ENCODE measurements at regions of chr2 and their contacts with region 1.

Region 1: DNA sequence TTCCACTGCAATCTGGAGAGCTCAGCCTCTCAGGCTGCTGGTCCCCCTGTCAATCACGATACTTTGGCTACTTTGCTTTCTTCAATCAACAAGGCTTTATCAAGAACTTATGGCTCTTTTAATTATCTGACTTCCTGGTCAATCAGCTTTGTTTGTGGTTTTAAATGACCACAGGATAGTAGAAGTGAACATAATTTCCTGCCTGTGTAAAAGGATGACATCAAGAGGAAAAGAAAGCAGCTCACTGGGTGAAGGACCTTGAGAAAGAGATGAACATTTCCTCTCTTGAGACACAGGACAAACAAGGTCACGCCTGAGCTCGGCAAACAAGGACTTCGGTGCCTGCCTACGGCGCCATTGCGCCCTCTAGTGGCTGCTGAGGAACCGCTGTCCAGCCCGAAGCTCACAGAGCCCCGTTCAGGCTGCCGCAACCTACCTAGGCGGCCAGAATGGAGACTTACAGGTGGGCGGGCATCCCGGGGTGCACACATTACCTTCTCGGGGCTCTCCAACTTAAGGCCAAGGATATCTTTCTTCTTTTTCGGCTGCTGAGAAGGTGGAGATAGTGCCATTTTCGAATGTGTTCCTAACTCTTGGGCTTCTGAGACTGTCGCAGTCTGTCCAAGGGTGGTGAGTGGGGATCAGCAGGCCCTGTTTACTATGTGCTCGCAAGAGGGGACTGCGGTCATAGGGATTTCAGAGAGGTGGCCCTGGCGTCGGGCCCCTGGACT is 54.0 kb downstream of the IL1RL2 start:
- DNase-seq: peak; percentile 77 to 83 (median 77)
- H3K4me3 ChIP-seq: no peak overlapping the region
- H3K4me3 Mint-ChIP-seq: peak overlapping the region in 4 of 8 donors; percentile 10 to 57 (median 38)
- H3K27ac ChIP-seq: no peak overlapping the region
- H3K27ac Mint-ChIP-seq: peak overlapping the region in 6 of 7 donors; percentile 3 to 78 (median 62)
- H3K4me1 ChIP-seq: peaks cover 12% of the 10 kb centered on the region
- H3K4me1 Mint-ChIP-seq: peaks cover 6 to 19% (median 11%) of the 10 kb centered on the region in 4 donors
- H3K27me3 ChIP-seq: no peaks in the 10 kb centered on the region
- H3K27me3 Mint-ChIP-seq: no peaks in the 10 kb centered on the region

Region 2: GRCh38 chr2:101419096-101419663 is 821.6 kb before region 1 on chr2:
- CTCF ChIA-PET with region 1: interaction called, 8 read pairs
- POLR2A ChIA-PET with region 1: interaction called, 3 read pairs
- intact Hi-C with region 1: loop called (anchors 2 kb)
- DNase-seq: peak; percentile 59 to 66 (median 64)
- H3K4me3 ChIP-seq: no peak overlapping the region
- H3K4me3 Mint-ChIP-seq: no peak overlapping the region
- H3K27ac ChIP-seq: no peak overlapping the region
- H3K27ac Mint-ChIP-seq: no peak overlapping the region
- H3K4me1 ChIP-seq: no peaks in the 10 kb centered on the region
- H3K4me1 Mint-ChIP-seq: no peaks in the 10 kb centered on the region
- H3K27me3 ChIP-seq: no peaks in the 10 kb centered on the region
- H3K27me3 Mint-ChIP-seq: no peaks in the 10 kb centered on the region

Region 3: DNA sequence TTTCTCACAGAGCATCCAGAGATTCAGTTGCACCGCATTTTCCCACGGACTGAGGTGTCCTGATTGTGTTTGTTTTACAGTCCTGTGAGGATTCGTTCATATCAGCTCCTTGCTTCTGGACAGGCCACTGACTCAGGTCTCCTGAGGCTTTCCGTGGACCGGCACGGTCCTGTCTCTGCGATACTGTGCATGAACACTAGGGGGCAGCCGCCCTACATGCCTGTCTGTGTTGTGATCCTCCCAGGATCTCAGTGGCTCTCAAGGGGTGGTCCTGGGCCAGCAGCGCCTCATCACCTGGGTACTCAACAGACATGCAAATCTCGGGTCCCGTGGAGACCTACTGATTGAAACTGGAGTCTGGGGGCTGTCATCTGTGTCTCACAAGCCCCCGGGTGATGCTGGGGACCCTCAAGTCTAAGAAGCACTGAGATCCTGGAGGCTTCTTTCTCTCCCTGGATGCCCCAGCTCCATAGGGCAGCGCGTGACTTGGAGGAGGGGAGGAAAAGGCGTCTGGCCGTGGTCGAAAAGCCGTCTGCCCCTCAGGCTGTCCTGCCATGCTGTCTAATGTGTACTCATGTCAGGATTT is 220.1 kb before region 1 on chr2:
- CTCF ChIA-PET with region 1: interaction called, 318 read pairs
- POLR2A ChIA-PET with region 1: interaction called, 11 read pairs
- intact Hi-C with region 1: loop called (anchors 1 kb)
- DNase-seq: peak; percentile 70 to 80 (median 72)
- H3K4me3 ChIP-seq: no peak overlapping the region
- H3K4me3 Mint-ChIP-seq: peak overlapping the region in 2 of 8 donors; percentile 24 to 31
- H3K27ac ChIP-seq: no peak overlapping the region
- H3K27ac Mint-ChIP-seq: no peak overlapping the region
- H3K4me1 ChIP-seq: no peaks in the 10 kb centered on the region
- H3K4me1 Mint-ChIP-seq: peaks cover 0 to 6% (median 3%) of the 10 kb centered on the region in 4 donors
- H3K27me3 ChIP-seq: no peaks in the 10 kb centered on the region
- H3K27me3 Mint-ChIP-seq: no peaks in the 10 kb centered on the region

Region 4: DNA sequence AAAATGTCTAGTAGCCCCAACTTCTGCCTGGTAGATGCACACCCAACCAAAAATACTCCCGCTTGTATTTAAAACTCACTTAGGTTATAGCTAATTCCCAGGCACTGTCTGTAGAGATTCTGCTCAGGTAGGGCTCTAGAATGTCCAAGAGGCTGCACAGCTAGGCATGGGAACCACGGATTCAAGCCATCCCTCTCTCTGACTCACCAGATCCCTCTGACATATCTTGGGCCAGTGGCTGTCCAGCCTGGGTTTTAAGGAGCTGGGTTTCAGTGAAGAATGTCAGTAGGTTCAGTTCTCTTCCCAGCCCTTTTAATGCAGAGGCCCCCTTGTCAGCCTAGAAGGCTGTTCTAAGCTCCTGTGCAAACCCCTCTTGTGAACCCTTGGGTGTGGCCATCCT is 114.2 kb before region 1 on chr2:
- CTCF ChIA-PET with region 1: interaction called, 11 read pairs
- POLR2A ChIA-PET with region 1: no interaction called
- intact Hi-C with region 1: no loop called
- DNase-seq: no peak
- H3K4me3 ChIP-seq: no peak overlapping the region
- H3K4me3 Mint-ChIP-seq: no peak overlapping the region
- H3K27ac ChIP-seq: no peak overlapping the region
- H3K27ac Mint-ChIP-seq: no peak overlapping the region
- H3K4me1 ChIP-seq: no peaks in the 10 kb centered on the region
- H3K4me1 Mint-ChIP-seq: peaks cover 0 to 7% (median 2%) of the 10 kb centered on the region in 4 donors
- H3K27me3 ChIP-seq: no peaks in the 10 kb centered on the region
- H3K27me3 Mint-ChIP-seq: peaks cover 2 to 3% of the 10 kb centered on the region in 2 donors

Region 5: DNA sequence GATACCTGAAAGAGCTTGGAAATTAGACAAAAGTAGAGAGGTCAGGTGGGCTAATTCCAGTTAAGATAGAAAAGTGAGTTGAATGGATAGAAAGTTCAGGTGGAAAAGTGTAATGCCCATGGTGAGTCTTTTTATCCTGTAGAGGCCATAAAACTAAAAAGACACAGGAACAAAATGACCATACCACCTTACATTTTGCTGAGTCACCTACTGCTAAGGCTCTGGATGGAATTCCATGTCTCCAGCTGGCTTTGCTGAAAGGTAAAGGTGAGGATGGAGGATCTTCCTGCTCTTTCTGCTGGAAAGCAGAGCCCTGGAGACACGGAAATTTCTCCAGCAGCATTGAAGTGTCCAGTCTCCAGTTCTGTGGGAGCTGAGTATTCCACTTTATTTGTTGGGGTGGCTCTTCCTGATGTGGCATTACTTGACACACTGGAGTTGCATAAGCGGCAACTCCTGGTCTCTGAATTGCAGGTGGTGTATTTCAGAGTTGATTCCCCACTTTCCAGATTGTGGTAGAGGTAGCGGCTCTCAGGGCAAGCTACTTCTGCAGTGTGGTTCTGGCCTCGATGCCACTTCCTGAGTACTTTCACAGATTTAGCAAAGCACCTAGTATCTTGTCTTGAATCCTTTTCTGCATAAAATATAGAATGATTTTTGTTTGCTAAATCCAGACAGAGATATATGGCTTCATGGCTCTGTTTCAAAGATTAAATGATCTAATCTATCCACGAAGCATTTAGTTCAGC is 43.2 kb before region 1 on chr2:
- CTCF ChIA-PET with region 1: interaction called, 10 read pairs
- POLR2A ChIA-PET with region 1: no interaction called
- intact Hi-C with region 1: no loop called
- DNase-seq: no peak
- H3K4me3 ChIP-seq: no peak overlapping the region
- H3K4me3 Mint-ChIP-seq: no peak overlapping the region
- H3K27ac ChIP-seq: no peak overlapping the region
- H3K27ac Mint-ChIP-seq: no peak overlapping the region
- H3K4me1 ChIP-seq: peaks cover 4% of the 10 kb centered on the region
- H3K4me1 Mint-ChIP-seq: peaks cover 2 to 9% (median 7%) of the 10 kb centered on the region in 4 donors
- H3K27me3 ChIP-seq: no peaks in the 10 kb centered on the region
- H3K27me3 Mint-ChIP-seq: peaks cover 2% of the 10 kb centered on the region in 2 donors

Region 6: DNA sequence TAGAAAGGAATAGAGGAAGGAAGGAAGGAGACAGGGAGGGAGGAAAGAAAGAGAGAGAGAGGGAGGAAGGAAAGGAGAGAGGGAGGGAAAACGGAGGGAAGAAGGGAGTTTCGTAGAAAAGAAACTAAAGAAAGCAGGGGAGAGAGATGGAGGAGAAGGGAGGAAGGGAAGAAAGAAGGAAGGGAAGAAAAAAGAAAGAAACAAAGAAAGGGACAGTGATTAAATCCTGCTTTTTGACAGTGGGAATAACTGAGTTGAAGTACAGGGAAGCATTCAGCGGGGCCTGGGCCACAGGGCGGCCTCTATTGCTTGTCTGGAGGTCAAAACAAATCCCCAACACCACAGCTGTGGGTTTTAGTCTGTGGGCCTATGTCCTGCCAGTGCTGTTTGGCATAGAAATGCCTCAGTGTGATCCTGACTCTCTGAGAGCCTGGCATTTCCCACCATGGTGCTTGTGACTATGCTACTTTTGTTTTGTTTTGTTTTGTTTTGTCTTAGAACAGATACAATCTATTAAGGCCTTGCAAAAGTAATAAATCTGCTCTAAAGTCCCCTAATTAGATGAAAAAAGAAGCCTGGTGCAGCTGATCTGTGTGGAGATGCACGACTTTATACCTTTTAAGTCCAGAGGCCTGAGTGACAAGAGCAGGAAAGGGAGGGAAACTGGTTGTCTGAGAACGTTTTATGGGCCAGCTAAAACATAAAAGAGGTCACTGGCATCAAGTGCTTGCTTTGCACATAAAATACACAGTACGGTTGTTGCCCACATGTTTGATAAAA is 14.0 kb before region 1 on chr2:
- CTCF ChIA-PET with region 1: interaction called, 33 read pairs
- POLR2A ChIA-PET with region 1: interaction called, 6 read pairs
- intact Hi-C with region 1: no loop called
- DNase-seq: no peak
- H3K4me3 ChIP-seq: no peak overlapping the region
- H3K4me3 Mint-ChIP-seq: peak overlapping the region in 2 of 8 donors; percentile 17
- H3K27ac ChIP-seq: no peak overlapping the region
- H3K27ac Mint-ChIP-seq: peak overlapping the region; percentile 63 to 92 (median 83)
- H3K4me1 ChIP-seq: peaks cover 20% of the 10 kb centered on the region
- H3K4me1 Mint-ChIP-seq: peaks cover 7 to 18% (median 12%) of the 10 kb centered on the region in 4 donors
- H3K27me3 ChIP-seq: no peaks in the 10 kb centered on the region
- H3K27me3 Mint-ChIP-seq: no peaks in the 10 kb centered on the region

Region 7: GRCh38 chr2:102355526-102356380 is 114.9 kb after region 1 on chr2 and contains the start of gene IL18R1:
- CTCF ChIA-PET with region 1: interaction called, 31 read pairs
- POLR2A ChIA-PET with region 1: no interaction called
- intact Hi-C with region 1: no loop called
- DNase-seq: peak; percentile 63 to 72 (median 67)
- H3K4me3 ChIP-seq: peak within 1 kb of the TSS; percentile 80 to 81
- H3K4me3 Mint-ChIP-seq: peak within 1 kb of the TSS; percentile 94 to 99 (median 98)
- H3K27ac ChIP-seq: peak within 1 kb of the TSS; percentile 85
- H3K27ac Mint-ChIP-seq: peak within 1 kb of the TSS; percentile 93 to 98 (median 96)
- H3K4me1 ChIP-seq: peaks cover 46% of the 10 kb centered on the region
- H3K4me1 Mint-ChIP-seq: peaks cover 30 to 46% (median 38%) of the 10 kb centered on the region in 4 donors
- H3K27me3 ChIP-seq: no peaks in the 10 kb centered on the region
- H3K27me3 Mint-ChIP-seq: no peaks in the 10 kb centered on the region
- total RNA-seq, gene IL18R1: 9.5 to 11.0 TPM

Region 8: GRCh38 chr2:102657770-102658169 is 417.0 kb after region 1 on chr2:
- CTCF ChIA-PET with region 1: no interaction called
- POLR2A ChIA-PET with region 1: no interaction called
- intact Hi-C with region 1: no loop called
- DNase-seq: no peak
- H3K4me3 ChIP-seq: no peak overlapping the region
- H3K4me3 Mint-ChIP-seq: no peak overlapping the region
- H3K27ac ChIP-seq: no peak overlapping the region
- H3K27ac Mint-ChIP-seq: no peak overlapping the region
- H3K4me1 ChIP-seq: no peaks in the 10 kb centered on the region
- H3K4me1 Mint-ChIP-seq: peaks cover 0 to 5% (median 4%) of the 10 kb centered on the region in 4 donors
- H3K27me3 ChIP-seq: no peaks in the 10 kb centered on the region
- H3K27me3 Mint-ChIP-seq: peaks cover 8 to 9% of the 10 kb centered on the region in 2 donors